ENCODE measurements at regions of chr11 and their contacts with region 1.

Region 1: GRCh38 chr11:13238879-13239514 is 38.6 kb upstream of the BMAL1 start:
- DNase-seq: peak; percentile 70
- H3K4me3 Mint-ChIP-seq: no peak overlapping the region
- H3K27ac Mint-ChIP-seq: no peak overlapping the region
- H3K4me1 Mint-ChIP-seq: no peaks in the 10 kb centered on the region
- H3K27me3 Mint-ChIP-seq: no peaks in the 10 kb centered on the region

Region 2: GRCh38 chr11:12963792-12964536 is 275.0 kb before region 1 on chr11:
- CTCF ChIA-PET with region 1: interaction called, 5 read pairs
- intact Hi-C with region 1: loop called (anchors 1 kb)
- DNase-seq: peak; percentile 75
- H3K4me3 Mint-ChIP-seq: no peak overlapping the region
- H3K27ac Mint-ChIP-seq: no peak overlapping the region
- H3K4me1 Mint-ChIP-seq: no peaks in the 10 kb centered on the region
- H3K27me3 Mint-ChIP-seq: peaks cover 13% of the 10 kb centered on the region

Region 3: GRCh38 chr11:13040969-13041561 is 197.9 kb before region 1 on chr11:
- CTCF ChIA-PET with region 1: no interaction called
- intact Hi-C with region 1: no loop called
- DNase-seq: no peak
- H3K4me3 Mint-ChIP-seq: no peak overlapping the region
- H3K27ac Mint-ChIP-seq: no peak overlapping the region
- H3K4me1 Mint-ChIP-seq: no peaks in the 10 kb centered on the region
- H3K27me3 Mint-ChIP-seq: peaks cover 17% of the 10 kb centered on the region

Region 4: GRCh38 chr11:13262096-13262495 is 23.1 kb after region 1 on chr11:
- CTCF ChIA-PET with region 1: no interaction called
- intact Hi-C with region 1: no loop called
- DNase-seq: no peak
- H3K4me3 Mint-ChIP-seq: no peak overlapping the region
- H3K27ac Mint-ChIP-seq: no peak overlapping the region
- H3K4me1 Mint-ChIP-seq: peaks cover 17% of the 10 kb centered on the region
- H3K27me3 Mint-ChIP-seq: no peaks in the 10 kb centered on the region

Measured in activated naive CD4-positive, alpha-beta T cell treated with anti-CD3 and anti-CD28 coated beads for 36 hours (primary cell).